ENCODE measurements at regions of chr1 and their contacts with region 1.

Region 1: DNA sequence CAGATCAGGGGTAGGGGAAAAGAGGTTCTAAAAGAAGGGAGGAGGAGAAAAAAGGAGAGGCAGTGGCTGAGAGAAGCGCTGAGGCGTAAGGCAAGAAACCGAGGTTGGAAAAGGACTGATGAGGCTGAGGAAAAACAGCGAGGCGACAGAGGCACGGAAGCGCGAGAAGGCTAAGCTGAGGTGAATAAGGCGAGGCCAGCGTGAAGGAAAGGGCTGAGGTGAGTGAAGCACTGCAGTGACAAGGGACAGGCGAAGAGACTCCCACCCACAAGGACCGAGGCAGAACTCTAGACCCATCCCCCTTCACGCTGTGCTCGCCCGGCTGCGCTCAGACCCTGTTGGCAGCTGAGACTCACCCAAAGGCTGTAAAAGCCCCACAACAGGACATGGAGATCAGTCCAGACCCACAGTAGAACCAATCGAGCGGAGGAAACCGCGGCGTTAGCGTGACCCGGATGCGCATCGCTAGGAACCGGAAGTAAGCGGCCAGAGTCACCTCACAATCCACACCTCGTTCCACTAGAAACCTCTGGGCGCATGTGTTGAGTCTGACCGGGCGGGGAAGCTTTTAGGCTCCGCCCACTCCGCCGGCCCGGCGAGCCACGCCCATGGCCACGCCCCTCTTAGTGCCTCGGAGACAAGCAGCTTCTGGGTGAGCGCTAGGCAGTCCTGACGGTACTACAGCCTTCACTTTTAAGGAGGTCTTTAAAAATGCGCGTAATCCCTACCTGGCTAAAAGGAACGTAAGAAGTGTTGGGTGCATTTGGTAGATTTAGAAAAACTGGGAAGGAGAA is at the start of gene EYA3:
- DNase-seq: peak; percentile 99
- H3K4me3 Mint-ChIP-seq: peak within 1 kb of the TSS; percentile 92
- H3K27ac Mint-ChIP-seq: peak within 1 kb of the TSS; percentile 95
- H3K4me1 Mint-ChIP-seq: peaks cover 40% of the 10 kb centered on the region
- H3K27me3 Mint-ChIP-seq: peaks cover 6% of the 10 kb centered on the region

Region 2: GRCh38 chr1:28056129-28056925 is 32.0 kb before region 1 on chr1:
- CTCF ChIA-PET with region 1: no interaction called
- DNase-seq: peak; percentile 49
- H3K4me3 Mint-ChIP-seq: no peak overlapping the region
- H3K27ac Mint-ChIP-seq: peak overlapping the region; percentile 62
- H3K4me1 Mint-ChIP-seq: peaks cover 29% of the 10 kb centered on the region
- H3K27me3 Mint-ChIP-seq: no peaks in the 10 kb centered on the region

Region 3: DNA sequence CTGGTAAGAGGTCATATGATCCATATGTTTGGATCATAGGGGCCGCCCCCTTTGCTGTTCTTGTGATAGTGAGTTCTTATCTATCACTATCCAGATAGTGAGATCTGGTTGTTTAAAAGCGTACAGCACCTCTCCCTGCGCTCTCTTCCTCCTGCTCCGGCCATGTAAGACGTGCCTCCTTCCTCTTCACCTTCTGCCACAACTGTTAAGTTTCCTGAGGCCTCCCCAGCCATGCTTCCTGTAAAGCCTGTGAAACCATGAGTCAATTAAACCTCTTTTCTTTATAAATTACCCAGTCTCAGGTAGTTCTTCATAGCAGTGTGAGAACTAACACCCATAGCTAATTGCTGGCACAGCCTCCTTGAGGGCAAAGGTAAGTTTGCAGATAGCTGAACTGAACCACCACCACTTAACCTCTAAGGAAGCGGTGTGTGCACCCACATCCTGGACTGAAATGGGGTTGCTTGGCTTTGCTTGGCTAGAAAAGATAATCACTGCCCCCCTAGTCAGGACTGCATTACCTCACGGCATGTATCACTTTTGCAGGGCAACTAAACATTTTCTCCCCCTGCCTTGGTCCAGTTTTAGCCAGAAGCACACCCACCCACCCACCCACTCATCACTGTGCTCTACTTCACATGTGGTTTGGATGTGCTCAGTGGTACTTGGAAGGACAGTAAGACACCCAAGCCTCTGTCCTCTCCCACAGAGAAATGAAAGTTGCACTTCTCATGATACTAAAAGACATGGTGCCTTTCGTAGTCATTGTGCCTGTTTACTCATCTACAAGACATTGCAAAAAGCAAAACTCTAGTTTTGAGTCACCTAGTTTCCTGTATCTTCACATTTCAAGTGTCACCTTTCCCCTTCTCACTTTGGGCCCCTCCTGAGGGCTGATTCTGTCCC is 111.2 kb after region 1 on chr1:
- CTCF ChIA-PET with region 1: interaction called, 14 read pairs
- DNase-seq: peak; percentile 87
- H3K4me3 Mint-ChIP-seq: peak overlapping the region; percentile 61
- H3K27ac Mint-ChIP-seq: peak overlapping the region; percentile 95
- H3K4me1 Mint-ChIP-seq: peaks cover 55% of the 10 kb centered on the region
- H3K27me3 Mint-ChIP-seq: no peaks in the 10 kb centered on the region

Region 4: DNA sequence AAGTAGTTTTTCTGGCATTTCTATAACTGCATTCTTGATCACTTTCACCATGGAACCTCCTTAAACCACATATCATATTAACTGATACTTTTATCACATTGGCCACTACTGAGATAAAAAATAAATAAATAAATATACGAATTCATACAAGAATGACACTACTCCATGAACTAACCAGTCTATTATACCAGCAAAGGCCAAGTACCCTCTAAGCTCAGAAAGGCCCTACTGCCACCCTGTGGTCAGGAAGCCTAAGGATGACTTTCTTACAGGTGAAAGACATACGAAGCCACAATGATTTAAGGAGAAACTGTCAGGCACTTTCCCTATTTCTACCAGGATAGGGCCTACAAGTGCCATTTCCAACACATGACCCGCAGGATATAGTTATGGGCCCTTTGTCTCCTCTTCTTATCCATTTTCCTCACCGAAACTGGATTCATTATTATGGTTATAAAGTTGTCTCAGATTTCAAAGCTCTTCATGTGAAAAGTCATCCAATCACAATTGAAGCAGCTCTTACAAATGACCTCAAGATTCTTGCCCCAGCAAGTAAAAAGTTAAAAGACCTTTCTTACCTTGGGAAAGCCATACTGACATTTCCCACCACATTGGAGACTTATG is 120.6 kb after region 1 on chr1:
- CTCF ChIA-PET with region 1: interaction called, 184 read pairs
- DNase-seq: peak; percentile 84
- H3K4me3 Mint-ChIP-seq: no peak overlapping the region
- H3K27ac Mint-ChIP-seq: no peak overlapping the region
- H3K4me1 Mint-ChIP-seq: peaks cover 11% of the 10 kb centered on the region
- H3K27me3 Mint-ChIP-seq: no peaks in the 10 kb centered on the region

Measured in activated naive CD4-positive, alpha-beta T cell treated with anti-CD3 and anti-CD28 coated beads, Interleukin-2, amount 10 ng/mL, durations not matched to agents 7 days and 5 days (primary cell).